Ascending aorta (tissue), 2 donors: ENCODE measurements at regions of chr17 and their contacts with region 1.

Region 1: GRCh38 chr17:794876-795275 is 12.7 kb downstream of the MRM3 start:
- DNase-seq: peak in 1 of 2 donors; percentile 88
- H3K4me3 ChIP-seq: peak overlapping the region in 1 of 2 donors; percentile 52
- H3K27ac ChIP-seq: peak overlapping the region in 1 of 2 donors; percentile 35
- H3K4me1 ChIP-seq: peaks cover 0 to 7% of the 10 kb centered on the region in 2 donors
- H3K27me3 ChIP-seq: no peaks in the 10 kb centered on the region
- CTCF ChIP-seq: peak; percentile 74 to 92 (median 85)

Region 2: DNA sequence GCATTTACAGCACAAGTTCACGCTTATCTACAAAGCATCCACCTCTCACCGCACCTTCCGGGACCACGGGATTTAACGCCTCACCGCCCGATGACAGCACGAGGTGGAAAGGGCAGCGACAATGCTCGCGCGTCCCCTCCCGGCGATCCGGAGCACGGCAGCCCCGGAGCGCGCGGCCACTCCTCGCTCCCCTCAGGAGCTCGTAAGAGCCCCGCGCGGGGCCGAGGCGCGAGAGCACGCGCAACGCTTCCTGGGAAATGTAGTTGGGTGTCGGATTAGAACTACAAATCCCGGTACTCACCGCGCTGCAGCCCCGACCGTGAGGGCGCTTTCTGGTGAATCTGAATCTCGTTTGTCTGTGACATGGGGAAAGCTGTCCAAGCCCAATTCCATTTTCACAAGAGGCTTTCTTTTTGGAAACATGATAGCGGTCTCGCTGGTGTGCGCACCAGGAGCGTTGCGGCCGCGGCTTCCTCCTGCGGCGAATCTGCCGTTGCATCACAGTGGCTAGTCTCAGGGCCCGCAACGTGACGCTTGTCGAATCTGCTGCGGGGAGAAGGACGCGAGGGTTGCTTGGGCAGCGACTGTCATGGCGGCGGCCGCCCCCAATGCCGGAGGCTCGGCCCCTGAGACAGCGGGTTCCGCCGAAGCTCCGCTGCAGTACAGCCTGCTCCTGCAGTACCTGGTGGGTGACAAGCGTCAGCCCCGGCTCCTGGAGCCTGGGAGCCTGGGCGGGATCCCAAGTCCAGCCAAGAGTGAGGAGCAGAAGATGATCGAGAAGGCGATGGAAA is 201.9 kb after region 1 on chr17 and contains the start of gene TIMM22:
- intact Hi-C with region 1: loop called (anchors 5 kb)
- DNase-seq: peak; percentile 73 to 95
- H3K4me3 ChIP-seq: peak within 1 kb of the TSS; percentile 83 to 86
- H3K27ac ChIP-seq: peak within 1 kb of the TSS; percentile 68 to 79
- H3K4me1 ChIP-seq: peaks cover 19 to 30% of the 10 kb centered on the region in 2 donors
- H3K27me3 ChIP-seq: no peaks in the 10 kb centered on the region
- CTCF ChIP-seq: peak; percentile 94 to 98 (median 98)
- total RNA-seq, gene TIMM22: 12.1 TPM